ENCODE measurements at regions of chr10 and their contacts with region 1.

Region 1: DNA sequence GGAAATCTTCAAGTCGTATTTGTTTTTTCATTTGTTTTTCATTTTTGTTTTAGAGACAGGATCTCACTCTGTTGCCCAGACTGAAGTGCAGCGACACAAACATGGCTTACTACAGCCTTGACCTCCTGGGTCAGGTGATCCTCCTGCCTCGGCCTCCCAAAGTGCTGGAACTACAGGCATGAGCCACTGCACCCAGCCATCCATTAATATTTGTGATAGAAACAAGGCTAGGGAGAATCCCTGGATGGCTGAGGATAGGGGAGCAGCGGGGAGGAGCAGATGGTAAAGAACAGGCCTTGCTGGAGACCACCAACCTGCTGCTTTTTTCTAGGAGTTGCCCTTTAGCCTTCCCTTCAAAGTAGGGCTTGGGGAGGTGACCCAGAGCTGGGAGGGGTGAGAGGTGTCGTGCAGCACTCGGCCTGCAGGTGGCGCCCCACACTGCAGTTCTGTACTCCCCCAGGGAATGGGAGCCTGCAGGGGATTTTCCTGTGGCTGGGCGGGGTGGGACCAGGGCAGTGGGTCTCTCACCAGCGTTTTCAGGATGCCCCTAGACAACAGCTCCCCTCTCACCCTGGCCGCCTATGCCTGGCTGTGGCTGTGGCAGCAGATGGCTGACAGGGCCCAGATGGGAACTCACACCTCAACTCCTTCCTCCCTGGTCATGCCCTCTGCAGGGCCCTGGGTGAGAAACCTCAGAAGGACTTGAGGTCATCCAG is 12.6 kb upstream of the CDH23 start:
- DNase-seq: peak; percentile 46
- H3K4me3 ChIP-seq: no peak overlapping the region
- H3K27ac ChIP-seq: no peak overlapping the region
- H3K4me1 ChIP-seq: no peaks in the 10 kb centered on the region
- H3K27me3 ChIP-seq: no peaks in the 10 kb centered on the region
- CTCF ChIP-seq: peak; percentile 71 to 92 (median 88)
- POLR2A ChIP-seq: no peak

Region 2: GRCh38 chr10:71569775-71570588 is 185.9 kb after region 1 on chr10:
- intact Hi-C with region 1: loop called (anchors 5 kb)
- DNase-seq: peak; percentile 71
- H3K4me3 ChIP-seq: no peak overlapping the region
- H3K27ac ChIP-seq: no peak overlapping the region
- H3K4me1 ChIP-seq: no peaks in the 10 kb centered on the region
- H3K27me3 ChIP-seq: no peaks in the 10 kb centered on the region
- CTCF ChIP-seq: peak; percentile 77 to 92 (median 88)
- POLR2A ChIP-seq: no peak

Region 3: GRCh38 chr10:71708301-71708703 is 324.2 kb after region 1 on chr10:
- intact Hi-C with region 1: loop called (anchors 5 kb)
- DNase-seq: peak; percentile 21
- H3K4me3 ChIP-seq: no peak overlapping the region
- H3K27ac ChIP-seq: no peak overlapping the region
- H3K4me1 ChIP-seq: no peaks in the 10 kb centered on the region
- H3K27me3 ChIP-seq: no peaks in the 10 kb centered on the region
- CTCF ChIP-seq: peak; percentile 35 to 86 (median 72)
- POLR2A ChIP-seq: no peak